Heart right ventricle (tissue), 16 donors: ENCODE measurements at regions of chr3 and their contacts with region 1.

Region 1: DNA sequence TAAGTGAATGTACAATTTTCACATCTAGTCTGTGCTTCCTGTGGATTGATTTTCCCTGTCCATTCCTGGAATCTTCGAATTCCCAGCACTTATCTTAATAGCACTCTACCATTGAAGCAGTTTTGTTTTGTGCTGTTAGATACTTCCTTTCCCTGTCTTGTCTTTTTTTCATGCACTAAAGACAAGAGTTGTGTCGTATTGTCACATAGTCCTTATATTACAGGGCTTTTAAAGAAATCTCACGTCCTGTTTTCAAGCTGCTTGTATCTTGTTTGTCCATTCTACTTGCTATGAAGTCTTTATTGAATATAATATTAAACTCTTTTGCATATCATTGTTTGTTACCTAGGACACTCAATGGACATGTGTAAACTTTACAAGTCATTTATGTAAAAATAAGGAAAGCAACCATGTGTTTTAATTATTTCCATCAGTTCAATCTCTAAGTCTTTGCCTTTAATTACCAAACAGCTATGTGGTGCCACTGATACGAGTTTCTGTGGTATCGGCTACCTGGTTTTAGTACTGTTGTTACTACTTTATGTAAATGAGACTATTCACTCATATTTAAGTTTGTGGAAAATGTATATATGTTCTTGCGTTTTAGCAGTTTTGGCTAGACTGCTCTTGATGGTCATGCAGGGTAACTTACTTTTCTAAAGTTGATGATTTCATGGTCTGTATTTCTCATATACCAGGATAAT is 10.3 kb downstream of the PIK3CA start:
- DNase-seq: no peak
- ATAC-seq: no peak
- H3K4me3 ChIP-seq: no peak overlapping the region
- H3K27ac ChIP-seq: no peak overlapping the region
- H3K4me1 ChIP-seq: peaks cover 0 to 65% (median 33%) of the 10 kb centered on the region in 9 donors
- H3K27me3 ChIP-seq: no peaks in the 10 kb centered on the region
- CTCF ChIP-seq: no peak

Region 2: DNA sequence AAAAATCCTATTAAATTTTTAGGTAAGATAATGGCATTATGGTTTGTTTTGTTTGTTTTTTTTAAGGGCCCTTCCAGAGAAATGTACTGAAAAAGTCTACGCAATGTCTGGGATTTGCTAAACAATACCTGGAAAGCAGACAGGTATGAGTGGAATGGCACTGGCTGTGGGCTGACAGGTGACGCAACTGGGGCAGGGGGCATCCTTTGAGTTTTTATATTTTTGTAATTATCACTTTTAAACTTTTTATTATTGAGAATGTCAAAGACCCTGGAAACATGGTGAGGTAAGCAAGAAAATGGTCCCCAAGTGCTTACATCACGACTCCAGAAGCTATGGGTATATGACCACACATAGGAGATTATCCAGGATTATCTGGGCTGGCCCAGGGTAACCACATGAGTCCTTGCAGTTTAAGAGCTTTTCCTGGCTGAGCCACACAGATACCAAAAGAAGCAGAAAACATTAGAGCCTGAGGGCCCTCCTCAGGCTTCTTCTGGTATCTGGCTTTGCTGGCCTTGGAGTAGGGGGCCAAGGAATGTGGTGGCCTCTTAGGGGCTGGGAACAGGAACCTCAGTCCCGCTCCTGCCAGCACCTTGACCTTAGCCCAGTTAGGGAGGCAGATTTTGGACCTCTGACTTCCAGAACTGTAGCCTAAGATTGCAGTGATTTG is 363.3 kb before region 1 on chr3:
- intact Hi-C with region 1: no loop called
- DNase-seq: no peak
- ATAC-seq: no peak
- H3K4me3 ChIP-seq: no peak overlapping the region
- H3K27ac ChIP-seq: no peak overlapping the region
- H3K4me1 ChIP-seq: no peaks in the 10 kb centered on the region
- H3K27me3 ChIP-seq: no peaks in the 10 kb centered on the region
- CTCF ChIP-seq: no peak

Region 3: GRCh38 chr3:179168933-179169332 is 10.4 kb after region 1 on chr3:
- intact Hi-C with region 1: loop called in 1 of 10 experiments (anchors 1 kb)
- DNase-seq: no peak
- ATAC-seq: no peak
- H3K4me3 ChIP-seq: no peak overlapping the region
- H3K27ac ChIP-seq: no peak overlapping the region
- H3K4me1 ChIP-seq: peaks cover 0 to 12% (median 10%) of the 10 kb centered on the region in 9 donors
- H3K27me3 ChIP-seq: no peaks in the 10 kb centered on the region
- CTCF ChIP-seq: no peak